WTC11 (cell line): ENCODE measurements at regions of chr2 and their contacts with region 1.

Region 1: DNA sequence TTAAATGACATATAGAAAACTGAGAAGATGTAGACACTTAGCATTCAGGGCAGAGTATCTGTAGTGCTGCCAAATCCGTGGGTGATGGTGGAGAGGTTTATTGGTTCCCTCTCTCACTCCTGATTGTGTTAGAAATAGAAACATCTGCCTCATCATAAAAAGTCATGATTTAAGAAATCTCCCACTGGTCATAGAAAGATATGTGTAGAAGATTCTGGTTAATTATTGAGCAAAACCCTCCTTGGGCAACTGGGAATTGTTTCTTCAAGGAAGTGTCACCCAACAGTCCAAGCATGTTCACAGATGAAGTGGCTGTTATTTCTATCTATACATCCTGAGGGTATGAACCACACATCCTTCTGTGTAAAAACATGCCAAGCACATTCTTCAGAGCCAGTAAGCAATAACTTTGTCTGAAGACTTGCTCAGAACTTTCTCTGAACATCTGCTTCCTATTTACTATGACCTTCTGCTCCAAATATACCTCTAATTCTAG is 33.6 kb upstream of the CHRNA1 start:
- DNase-seq: no peak
- ATAC-seq: no peak
- H3K4me3 Mint-ChIP-seq: no peak overlapping the region
- H3K27ac Mint-ChIP-seq: peak overlapping the region; percentile 46; the same call in 1 of the 2 replicates
- H3K4me1 Mint-ChIP-seq: peaks cover 55% of the 10 kb centered on the region
- H3K27me3 Mint-ChIP-seq: no peaks in the 10 kb centered on the region
- CTCF ChIP-seq: no peak

Region 2: GRCh38 chr2:174738841-174739240 is 59.0 kb before region 1 on chr2:
- CTCF ChIA-PET with region 1: no interaction called
- POLR2A ChIA-PET with region 1: no interaction called
- DNase-seq: no peak
- ATAC-seq: no peak
- H3K4me3 Mint-ChIP-seq: no peak overlapping the region
- H3K27ac Mint-ChIP-seq: no peak overlapping the region
- H3K4me1 Mint-ChIP-seq: no peaks in the 10 kb centered on the region; the same call in 1 of the 2 replicates
- H3K27me3 Mint-ChIP-seq: no peaks in the 10 kb centered on the region; the same call in 1 of the 2 replicates
- CTCF ChIP-seq: no peak

Region 3: DNA sequence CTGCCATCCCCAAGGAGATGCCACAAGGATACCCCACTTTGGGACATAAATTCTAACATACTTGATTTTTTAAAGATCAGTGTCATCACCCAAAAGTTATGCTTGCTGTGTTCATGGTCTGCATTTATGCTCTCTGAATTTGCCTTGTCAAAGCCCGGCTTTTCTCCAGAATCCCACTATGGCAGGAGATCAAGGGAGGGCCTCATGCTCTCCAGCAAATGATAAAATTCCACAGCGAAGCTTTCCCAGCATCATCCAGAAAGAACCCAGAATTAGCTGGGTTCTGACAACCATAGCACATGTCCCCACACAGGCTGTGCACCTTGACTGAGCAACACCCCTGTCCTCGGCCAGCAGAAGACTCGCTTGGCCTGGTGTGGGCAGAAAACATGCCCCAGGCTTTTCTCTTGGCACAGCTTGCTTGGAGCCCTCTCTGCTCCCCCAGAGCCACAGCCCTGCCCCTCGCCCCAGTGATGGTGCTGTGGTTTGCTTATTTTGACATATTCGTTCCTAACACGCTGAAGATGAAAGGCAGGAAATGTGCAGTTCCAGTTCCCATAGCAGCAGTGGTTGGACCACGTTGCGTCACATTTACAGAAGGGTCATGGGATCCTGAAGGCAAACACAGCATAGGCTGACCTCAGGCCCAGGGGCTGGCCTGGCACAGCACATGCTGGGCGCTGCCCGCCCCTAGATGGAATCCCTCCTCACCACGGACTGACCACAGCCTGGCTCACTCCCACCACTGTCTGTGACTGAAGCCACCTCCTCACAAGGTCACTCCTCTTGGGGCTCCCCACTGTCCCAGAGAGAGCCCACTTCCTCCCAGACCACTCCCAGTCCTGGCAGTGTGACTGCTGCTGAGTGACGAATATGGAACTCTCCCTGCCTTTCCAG is 19.5 kb before region 1 on chr2:
- CTCF ChIA-PET with region 1: interaction called, 14 read pairs
- POLR2A ChIA-PET with region 1: no interaction called
- DNase-seq: no peak
- ATAC-seq: no peak
- H3K4me3 Mint-ChIP-seq: no peak overlapping the region
- H3K27ac Mint-ChIP-seq: no peak overlapping the region
- H3K4me1 Mint-ChIP-seq: peaks cover 83% of the 10 kb centered on the region
- H3K27me3 Mint-ChIP-seq: no peaks in the 10 kb centered on the region; the same call in none of the 2 replicates
- CTCF ChIP-seq: no peak

Region 4: GRCh38 chr2:174985630-174986029 is 187.8 kb after region 1 on chr2:
- CTCF ChIA-PET with region 1: interaction called, 13 read pairs
- POLR2A ChIA-PET with region 1: no interaction called
- DNase-seq: no peak
- ATAC-seq: no peak
- H3K4me3 Mint-ChIP-seq: no peak overlapping the region
- H3K27ac Mint-ChIP-seq: no peak overlapping the region
- H3K4me1 Mint-ChIP-seq: peaks cover 33% of the 10 kb centered on the region
- H3K27me3 Mint-ChIP-seq: no peaks in the 10 kb centered on the region
- CTCF ChIP-seq: no peak